MCF 10A (cell line): ENCODE measurements at regions of chr10 and their contacts with region 1.

Region 1: GRCh38 chr10:21173812-21174714 is 277.0 kb upstream of the NEBL start:
- DNase-seq: peak; percentile 79
- H3K4me3 Mint-ChIP-seq: peak overlapping the region; percentile 79
- H3K27ac Mint-ChIP-seq: peak overlapping the region; percentile 75
- H3K4me1 Mint-ChIP-seq: peaks cover 28% of the 10 kb centered on the region
- H3K27me3 Mint-ChIP-seq: no peaks in the 10 kb centered on the region
- CTCF ChIP-seq: no peak

Region 2: DNA sequence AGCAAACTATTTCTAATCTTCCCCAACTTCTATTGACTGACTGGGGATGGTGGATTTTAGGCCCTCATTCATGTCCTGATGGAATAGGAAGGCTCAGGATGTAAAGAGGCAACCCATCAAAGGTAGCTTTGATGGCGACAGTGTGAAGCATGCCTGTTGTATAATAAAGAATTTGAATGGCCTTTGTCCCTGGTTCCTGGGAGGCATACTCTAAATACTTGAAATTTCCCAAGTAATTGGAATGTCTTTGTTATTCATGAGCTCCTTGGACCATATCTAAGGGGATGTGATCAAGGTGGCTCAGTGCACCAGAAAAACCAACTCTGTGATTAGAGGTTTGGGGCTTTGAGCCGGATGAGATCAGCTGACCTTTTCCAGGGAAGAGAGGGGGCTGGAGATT is 12.4 kb before region 1 on chr10:
- CTCF ChIA-PET with region 1: interaction called, 10 read pairs
- POLR2A ChIA-PET with region 1: interaction called, 5 read pairs
- intact Hi-C with region 1: no loop called
- DNase-seq: no peak
- H3K4me3 Mint-ChIP-seq: no peak overlapping the region
- H3K27ac Mint-ChIP-seq: no peak overlapping the region
- H3K4me1 Mint-ChIP-seq: peaks cover 5% of the 10 kb centered on the region
- H3K27me3 Mint-ChIP-seq: no peaks in the 10 kb centered on the region
- CTCF ChIP-seq: no peak

Region 3: GRCh38 chr10:21184216-21184615 is 10.2 kb after region 1 on chr10:
- CTCF ChIA-PET with region 1: interaction called, 4 read pairs
- POLR2A ChIA-PET with region 1: interaction called, 26 read pairs
- intact Hi-C with region 1: no loop called
- DNase-seq: peak; percentile 73
- H3K4me3 Mint-ChIP-seq: no peak overlapping the region
- H3K27ac Mint-ChIP-seq: peak overlapping the region; percentile 95
- H3K4me1 Mint-ChIP-seq: peaks cover 24% of the 10 kb centered on the region
- H3K27me3 Mint-ChIP-seq: no peaks in the 10 kb centered on the region
- CTCF ChIP-seq: no peak

Region 4: GRCh38 chr10:21194464-21194993 is 20.5 kb after region 1 on chr10:
- CTCF ChIA-PET with region 1: interaction called, 5 read pairs
- POLR2A ChIA-PET with region 1: interaction called, 12 read pairs
- intact Hi-C with region 1: no loop called
- DNase-seq: peak; percentile 86
- H3K4me3 Mint-ChIP-seq: peak overlapping the region; percentile 13
- H3K27ac Mint-ChIP-seq: peak overlapping the region; percentile 43
- H3K4me1 Mint-ChIP-seq: peaks cover 29% of the 10 kb centered on the region
- H3K27me3 Mint-ChIP-seq: no peaks in the 10 kb centered on the region
- CTCF ChIP-seq: no peak

Region 5: GRCh38 chr10:21208666-21209316 is 34.7 kb after region 1 on chr10:
- CTCF ChIA-PET with region 1: no interaction called
- POLR2A ChIA-PET with region 1: no interaction called
- intact Hi-C with region 1: no loop called
- DNase-seq: no peak
- H3K4me3 Mint-ChIP-seq: no peak overlapping the region
- H3K27ac Mint-ChIP-seq: no peak overlapping the region
- H3K4me1 Mint-ChIP-seq: no peaks in the 10 kb centered on the region
- H3K27me3 Mint-ChIP-seq: no peaks in the 10 kb centered on the region
- CTCF ChIP-seq: no peak

Region 6: DNA sequence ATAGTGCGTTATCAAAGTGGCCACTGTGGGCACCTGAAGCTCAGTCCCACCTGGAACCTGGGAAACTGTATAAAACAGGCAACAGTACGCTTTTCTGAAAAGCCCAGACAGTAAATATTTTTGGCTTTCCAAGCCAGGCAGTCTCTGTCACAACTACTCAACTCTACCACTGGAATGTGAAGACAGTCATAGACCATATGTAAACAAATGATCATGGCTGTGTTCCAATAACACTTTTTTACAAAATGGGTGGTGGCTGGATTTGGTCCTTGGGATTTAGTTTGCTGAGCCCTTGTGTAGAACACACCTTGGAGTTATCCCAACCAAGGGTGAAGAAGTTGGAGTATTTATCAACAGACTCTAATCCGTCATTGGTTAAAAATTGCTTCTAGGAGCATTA is 91.6 kb after region 1 on chr10:
- CTCF ChIA-PET with region 1: interaction called, 4 read pairs
- POLR2A ChIA-PET with region 1: interaction called, 8 read pairs
- intact Hi-C with region 1: loop called (anchors 1 kb)
- DNase-seq: peak; percentile 83
- H3K4me3 Mint-ChIP-seq: peak overlapping the region; percentile 35
- H3K27ac Mint-ChIP-seq: peak overlapping the region; percentile 93
- H3K4me1 Mint-ChIP-seq: peaks cover 20% of the 10 kb centered on the region
- H3K27me3 Mint-ChIP-seq: no peaks in the 10 kb centered on the region
- CTCF ChIP-seq: no peak

Region 7: GRCh38 chr10:21273400-21273932 is 99.4 kb after region 1 on chr10:
- CTCF ChIA-PET with region 1: interaction called, 12 read pairs
- POLR2A ChIA-PET with region 1: interaction called, 3 read pairs
- intact Hi-C with region 1: no loop called
- DNase-seq: no peak
- H3K4me3 Mint-ChIP-seq: no peak overlapping the region
- H3K27ac Mint-ChIP-seq: no peak overlapping the region
- H3K4me1 Mint-ChIP-seq: peaks cover 11% of the 10 kb centered on the region
- H3K27me3 Mint-ChIP-seq: no peaks in the 10 kb centered on the region
- CTCF ChIP-seq: no peak